Activated CD4-positive, alpha-beta T cell treated with anti-CD3 and anti-CD28 coated beads for 36 hours (primary cell): ENCODE measurements at regions of chr7 and their contacts with region 1.

Region 1: DNA sequence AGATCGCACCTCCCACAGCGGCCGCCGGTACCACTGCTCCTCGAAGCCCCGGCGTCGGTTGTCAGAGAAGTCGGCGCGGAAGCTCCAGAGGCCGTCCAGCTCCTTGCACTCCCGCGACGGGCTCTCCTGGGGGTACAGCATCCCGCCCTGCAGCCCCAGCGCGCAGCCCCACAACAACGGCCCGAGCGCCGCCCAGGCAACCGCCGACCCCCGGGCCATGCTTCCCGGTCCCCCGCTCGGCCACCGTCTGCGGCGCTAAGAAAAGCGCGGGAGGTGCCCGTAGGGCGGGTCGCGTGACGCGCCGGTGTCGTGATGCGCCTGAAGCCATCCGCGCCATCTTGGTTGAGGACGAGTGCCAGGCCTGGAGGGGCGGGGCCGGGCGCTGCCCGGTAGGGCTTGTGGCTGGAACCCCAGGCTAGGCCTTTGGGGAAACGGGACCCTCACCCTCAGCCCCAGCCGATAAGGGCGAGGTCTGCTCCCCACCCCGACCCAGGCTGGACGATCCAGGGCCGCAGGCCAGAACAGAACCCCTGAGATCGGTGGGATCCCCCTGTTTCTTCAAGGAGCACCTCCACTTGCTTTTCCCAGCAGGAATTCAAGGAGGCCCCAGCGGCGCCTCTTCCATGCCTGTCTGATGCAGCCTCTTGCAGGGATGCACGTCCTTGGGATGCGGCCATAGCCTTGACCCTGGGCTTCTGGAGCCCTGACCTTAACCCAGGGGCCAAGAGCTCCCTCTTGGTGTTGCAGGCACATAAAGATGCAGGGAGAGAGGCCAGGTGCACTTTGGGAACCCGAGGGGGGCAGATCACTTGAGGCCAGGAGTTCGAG is at the start of gene GUSB:
- DNase-seq: peak; percentile 95
- ATAC-seq: peak; percentile 90
- H3K4me3 Mint-ChIP-seq: peak within 1 kb of the TSS; percentile 80
- H3K27ac Mint-ChIP-seq: peak within 1 kb of the TSS; percentile 90
- H3K4me1 Mint-ChIP-seq: peaks cover 8% of the 10 kb centered on the region
- H3K27me3 Mint-ChIP-seq: no peaks in the 10 kb centered on the region
- total RNA-seq, gene GUSB: 41.8 to 43.2 TPM

Region 2: GRCh38 chr7:65225422-65226006 is 756.7 kb before region 1 on chr7:
- CTCF ChIA-PET with region 1: no interaction called
- POLR2A ChIA-PET with region 1: no interaction called
- intact Hi-C with region 1: no loop called
- DNase-seq: peak; percentile 30
- ATAC-seq: peak; percentile 62
- H3K4me3 Mint-ChIP-seq: no peak overlapping the region
- H3K27ac Mint-ChIP-seq: no peak overlapping the region
- H3K4me1 Mint-ChIP-seq: no peaks in the 10 kb centered on the region
- H3K27me3 Mint-ChIP-seq: peaks cover 3% of the 10 kb centered on the region

Region 3: GRCh38 chr7:65750511-65751344 is 231.5 kb before region 1 on chr7:
- CTCF ChIA-PET with region 1: interaction called, 7 read pairs
- POLR2A ChIA-PET with region 1: no interaction called
- intact Hi-C with region 1: loop called (anchors 1 to 2 kb)
- DNase-seq: peak; percentile 93
- ATAC-seq: peak; percentile 99
- H3K4me3 Mint-ChIP-seq: peak overlapping the region; percentile 95
- H3K27ac Mint-ChIP-seq: peak overlapping the region; percentile 94
- H3K4me1 Mint-ChIP-seq: peaks cover 31% of the 10 kb centered on the region
- H3K27me3 Mint-ChIP-seq: no peaks in the 10 kb centered on the region

Region 4: GRCh38 chr7:65915921-65916657 is 66.1 kb before region 1 on chr7:
- CTCF ChIA-PET with region 1: no interaction called
- POLR2A ChIA-PET with region 1: no interaction called
- intact Hi-C with region 1: no loop called
- DNase-seq: no peak
- ATAC-seq: no peak
- H3K4me3 Mint-ChIP-seq: no peak overlapping the region
- H3K27ac Mint-ChIP-seq: no peak overlapping the region
- H3K4me1 Mint-ChIP-seq: no peaks in the 10 kb centered on the region
- H3K27me3 Mint-ChIP-seq: no peaks in the 10 kb centered on the region

Region 5: DNA sequence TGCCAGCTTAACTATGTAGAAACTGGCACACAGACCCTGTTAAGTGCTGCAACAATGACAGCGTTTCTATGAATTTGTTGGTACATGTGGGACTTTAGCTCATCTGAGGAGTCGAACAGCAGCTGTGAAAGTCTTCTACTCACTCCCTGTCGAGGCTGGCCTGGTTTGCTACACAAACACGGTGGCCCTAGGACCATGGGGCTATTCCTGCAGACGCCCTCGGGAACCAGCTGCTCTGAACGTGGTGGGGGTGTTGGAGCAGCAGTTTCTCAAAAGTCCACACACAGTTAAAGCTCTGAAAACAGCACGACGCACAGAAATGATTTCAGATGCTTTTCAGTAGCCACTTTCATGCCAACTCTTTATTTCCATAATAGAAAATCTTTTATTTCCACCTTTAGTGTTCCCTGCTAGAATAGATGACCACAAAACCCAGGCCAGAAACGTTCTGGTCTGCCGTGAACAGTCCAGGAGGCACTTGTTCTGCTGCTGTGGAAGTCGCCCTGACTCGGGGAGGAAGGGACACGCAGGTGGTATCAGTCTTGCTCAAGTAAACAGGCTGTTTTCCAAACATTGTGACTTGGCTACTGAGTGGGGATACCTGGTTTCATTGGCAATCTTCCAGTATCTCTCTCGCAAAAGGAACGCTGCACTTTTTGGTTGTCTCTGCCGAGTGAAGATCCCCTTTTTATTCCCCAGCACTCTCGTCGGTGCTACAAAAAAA is 21.7 kb before region 1 on chr7:
- CTCF ChIA-PET with region 1: no interaction called
- POLR2A ChIA-PET with region 1: no interaction called
- intact Hi-C with region 1: loop called in 1 of 2 experiments (anchors 2 kb)
- DNase-seq: no peak
- ATAC-seq: no peak
- H3K4me3 Mint-ChIP-seq: no peak overlapping the region
- H3K27ac Mint-ChIP-seq: no peak overlapping the region
- H3K4me1 Mint-ChIP-seq: no peaks in the 10 kb centered on the region
- H3K27me3 Mint-ChIP-seq: no peaks in the 10 kb centered on the region

Region 6: DNA sequence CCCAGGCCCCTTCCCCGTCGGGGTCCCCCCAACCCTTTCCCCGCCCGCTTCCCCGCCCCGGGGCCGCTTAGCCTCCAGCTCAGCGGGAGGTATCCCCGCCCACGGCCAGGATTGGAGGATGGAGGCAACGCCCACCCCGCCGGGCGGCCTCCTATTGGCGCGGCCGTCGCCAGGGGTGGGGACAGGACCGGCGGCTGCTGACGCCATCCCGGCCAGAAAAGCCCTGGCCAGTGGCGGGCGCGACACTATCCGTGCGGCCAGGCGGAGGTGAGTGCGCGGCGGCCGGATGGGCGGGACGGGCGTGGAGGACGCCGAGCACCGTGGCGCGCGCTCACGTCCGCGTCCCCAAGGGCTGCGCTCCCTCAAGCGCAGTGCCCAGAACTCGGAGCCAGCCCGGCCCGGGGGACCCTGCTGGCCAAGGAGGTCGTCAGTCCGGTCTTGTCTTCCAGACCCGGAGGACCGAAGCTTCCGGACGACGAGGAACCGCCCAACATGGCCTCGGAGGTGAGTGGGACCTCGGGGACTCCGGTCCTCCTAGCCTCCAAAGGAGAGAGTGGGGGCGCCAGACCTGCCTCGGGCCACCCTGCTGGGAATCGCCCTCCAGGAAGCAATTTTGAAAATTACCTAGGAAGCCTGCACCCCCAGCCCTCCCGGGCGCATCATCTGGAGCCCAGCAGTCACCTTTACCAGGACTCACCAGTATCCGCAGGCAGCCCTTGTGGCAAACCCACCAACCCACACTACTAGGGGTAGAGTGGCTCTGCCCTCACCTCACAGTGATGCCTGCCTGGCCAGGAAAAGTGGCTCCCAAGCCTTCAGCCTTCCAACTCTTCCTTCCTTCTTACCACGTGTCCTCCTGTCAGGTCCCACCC is 93.6 kb after region 1 on chr7 and contains the start of gene ASL:
- CTCF ChIA-PET with region 1: no interaction called
- POLR2A ChIA-PET with region 1: no interaction called
- intact Hi-C with region 1: loop called (anchors 1 to 5 kb)
- DNase-seq: peak; percentile 94
- ATAC-seq: peak; percentile 99
- H3K4me3 Mint-ChIP-seq: peak within 1 kb of the TSS; percentile 63
- H3K27ac Mint-ChIP-seq: no peak within 1 kb of the TSS
- H3K4me1 Mint-ChIP-seq: peaks cover 15% of the 10 kb centered on the region
- H3K27me3 Mint-ChIP-seq: no peaks in the 10 kb centered on the region
- total RNA-seq, gene ASL: 12.7 to 18.5 TPM

Region 7: GRCh38 chr7:66204822-66205740 is 222.9 kb after region 1 on chr7 and contains the start of gene TPST1:
- CTCF ChIA-PET with region 1: no interaction called
- POLR2A ChIA-PET with region 1: no interaction called
- intact Hi-C with region 1: loop called in 1 of 2 experiments (anchors 1 kb)
- DNase-seq: peak; percentile 88
- ATAC-seq: peak; percentile 96
- H3K4me3 Mint-ChIP-seq: peak within 1 kb of the TSS; percentile 81
- H3K27ac Mint-ChIP-seq: peak within 1 kb of the TSS; percentile 32
- H3K4me1 Mint-ChIP-seq: peaks cover 33% of the 10 kb centered on the region
- H3K27me3 Mint-ChIP-seq: peaks cover 17% of the 10 kb centered on the region
- total RNA-seq, gene TPST1: 1.0 to 1.1 TPM